Activated CD8-positive, alpha-beta memory T cell treated with anti-CD3 and anti-CD28 coated beads, Interleukin-2, amount 10 ng/mL, durations not matched to agents 7 days and 5 days (primary cell): ENCODE measurements at regions of chr21 and their contacts with region 1.

Region 1: DNA sequence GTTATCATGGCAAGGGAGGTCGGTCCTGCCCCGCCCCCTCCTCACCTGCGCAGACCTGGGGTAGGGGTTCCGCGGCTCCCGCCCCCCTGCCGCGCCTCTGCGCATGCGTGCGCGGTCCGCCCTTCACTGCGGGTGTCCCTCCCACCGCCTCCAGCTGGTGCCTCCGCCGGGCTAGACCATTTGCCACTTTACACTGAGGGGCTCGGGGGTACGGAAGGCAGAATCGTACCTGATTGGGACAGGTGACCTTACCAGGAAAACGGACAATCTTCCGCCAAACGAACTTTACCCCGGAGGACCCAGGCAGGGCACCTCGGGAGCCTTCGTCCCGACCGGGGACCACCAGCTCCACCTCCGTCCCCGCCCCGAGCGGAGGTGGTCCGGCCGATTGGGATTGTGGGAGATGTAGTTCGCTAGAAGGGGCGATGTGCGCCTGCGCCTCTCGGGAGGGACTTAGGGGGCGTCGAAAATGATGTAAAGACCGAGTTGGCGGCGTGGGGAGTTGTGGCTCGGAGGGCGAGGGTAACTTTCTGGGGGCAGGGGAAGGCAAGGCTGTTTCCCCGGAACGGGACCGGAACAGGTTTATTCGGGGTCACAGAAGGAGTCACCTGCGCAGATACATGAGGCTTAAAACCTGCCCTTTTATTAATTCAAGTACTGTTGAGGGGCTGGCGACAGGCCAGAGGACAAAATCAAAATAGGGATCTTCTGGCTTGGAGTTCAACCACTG is at the start of gene DNAJC28:
- DNase-seq: peak; percentile 96
- ATAC-seq: peak; percentile 99
- H3K4me3 Mint-ChIP-seq: peak within 1 kb of the TSS; percentile 82
- H3K27ac Mint-ChIP-seq: peak within 1 kb of the TSS; percentile 78
- H3K4me1 Mint-ChIP-seq: peaks cover 10% of the 10 kb centered on the region
- H3K27me3 Mint-ChIP-seq: peaks cover 12% of the 10 kb centered on the region
- total RNA-seq, gene DNAJC28: 0.53 to 0.75 TPM

Region 2: DNA sequence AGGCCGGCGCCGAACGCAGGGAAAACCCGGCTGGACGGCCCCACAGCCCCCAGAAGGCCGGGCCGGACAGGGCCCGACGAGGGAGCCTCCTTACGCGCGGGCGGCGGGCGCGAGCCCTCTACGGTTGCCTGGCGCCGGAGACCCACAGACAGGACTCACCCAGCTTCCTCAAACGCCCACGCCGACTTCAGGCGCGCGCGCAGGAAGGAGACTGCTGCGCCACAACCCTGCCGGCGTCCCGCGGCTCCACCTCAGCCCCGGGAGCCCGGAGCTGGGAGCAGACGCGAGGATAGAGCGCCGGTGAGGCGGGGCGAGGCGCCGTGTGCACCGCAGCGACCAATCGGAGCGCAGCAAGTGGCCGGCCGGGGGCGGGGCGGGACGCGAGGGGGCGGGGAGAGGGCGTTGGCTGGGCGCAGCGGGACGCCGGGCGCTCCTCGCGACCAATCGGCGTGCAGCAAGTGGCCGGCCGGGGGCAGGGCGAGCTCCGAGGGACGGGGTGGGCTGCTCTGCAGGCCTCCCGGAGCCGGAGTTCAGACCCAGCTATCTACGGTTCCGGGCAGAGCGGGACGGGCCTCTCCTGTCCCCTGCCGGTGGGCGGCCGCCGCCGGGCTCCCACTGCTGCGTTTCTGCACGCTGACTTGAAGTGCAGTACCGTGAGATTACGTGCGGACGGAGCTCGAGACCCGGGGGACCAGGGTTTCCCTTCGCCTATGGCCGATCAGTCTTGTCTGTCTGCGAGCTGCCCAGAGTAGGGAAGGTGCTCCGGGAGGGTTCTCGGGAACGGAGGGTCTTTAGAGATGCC is 11.7 kb before region 1 on chr21 and contains the start of gene TMEM50B:
- CTCF ChIA-PET with region 1: interaction called, 27 read pairs
- DNase-seq: peak; percentile 96
- ATAC-seq: peak; percentile 94
- H3K4me3 Mint-ChIP-seq: peak within 1 kb of the TSS; percentile 91
- H3K27ac Mint-ChIP-seq: peak within 1 kb of the TSS; percentile 89
- H3K4me1 Mint-ChIP-seq: peaks cover 13% of the 10 kb centered on the region
- H3K27me3 Mint-ChIP-seq: no peaks in the 10 kb centered on the region
- total RNA-seq, gene TMEM50B: 23.6 to 32.7 TPM

Region 3: GRCh38 chr21:33531007-33531406 is 39.5 kb after region 1 on chr21:
- CTCF ChIA-PET with region 1: no interaction called
- DNase-seq: no peak
- ATAC-seq: no peak
- H3K4me3 Mint-ChIP-seq: no peak overlapping the region
- H3K27ac Mint-ChIP-seq: no peak overlapping the region
- H3K4me1 Mint-ChIP-seq: peaks cover 8% of the 10 kb centered on the region
- H3K27me3 Mint-ChIP-seq: no peaks in the 10 kb centered on the region